Ascending aorta (tissue), 2 donors: ENCODE measurements at regions of chr10 and their contacts with region 1.

Region 1: GRCh38 chr10:62231371-62231770 is 37.3 kb downstream of the RTKN2 start:
- DNase-seq: no peak
- H3K4me3 ChIP-seq: no peak overlapping the region
- H3K27ac ChIP-seq: peak overlapping the region; percentile 28 to 48
- H3K4me1 ChIP-seq: peaks cover 0 to 30% of the 10 kb centered on the region in 2 donors
- H3K27me3 ChIP-seq: no peaks in the 10 kb centered on the region
- CTCF ChIP-seq: no peak

Region 2: GRCh38 chr10:61786728-61787127 is 444.6 kb before region 1 on chr10:
- intact Hi-C with region 1: no loop called
- DNase-seq: no peak
- H3K4me3 ChIP-seq: peak overlapping the region; percentile 29 to 51
- H3K27ac ChIP-seq: peak overlapping the region; percentile 44 to 55
- H3K4me1 ChIP-seq: peaks cover 0 to 6% of the 10 kb centered on the region in 2 donors
- H3K27me3 ChIP-seq: no peaks in the 10 kb centered on the region
- CTCF ChIP-seq: no peak

Region 3: DNA sequence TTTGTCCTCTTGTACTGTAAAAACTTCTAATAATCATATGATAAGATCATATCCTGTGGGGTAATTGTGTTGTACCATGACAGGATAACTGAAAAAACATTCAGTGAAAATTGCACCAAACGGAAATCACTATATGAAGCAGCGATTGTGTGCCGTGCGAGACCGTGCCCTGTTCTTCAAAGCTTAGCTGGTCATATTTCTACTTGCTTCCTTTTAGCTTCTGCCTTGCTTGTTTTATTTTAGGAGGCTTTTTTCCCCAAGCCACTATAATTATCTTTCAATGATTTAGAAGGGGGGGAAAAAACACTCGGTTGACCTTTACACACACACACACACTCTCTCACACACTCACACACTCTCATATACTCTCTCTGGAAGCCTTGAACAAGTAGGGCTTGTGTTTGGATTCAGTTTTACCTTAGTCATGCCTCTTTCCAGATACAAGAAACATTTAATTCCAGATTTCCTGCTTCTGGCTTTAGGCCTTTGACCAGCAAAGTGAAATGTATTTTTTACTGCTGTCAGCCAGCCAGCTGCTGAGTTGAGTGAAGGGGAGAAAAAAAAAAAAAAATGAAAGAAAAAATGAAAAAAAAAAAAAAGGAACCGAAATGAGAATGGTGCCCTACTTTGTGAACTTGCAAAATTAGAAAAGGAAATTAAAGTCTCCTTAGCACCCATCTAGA is 148.5 kb before region 1 on chr10:
- intact Hi-C with region 1: loop called (anchors 5 kb)
- DNase-seq: no peak
- H3K4me3 ChIP-seq: peak overlapping the region; percentile 12 to 43
- H3K27ac ChIP-seq: peak overlapping the region; percentile 64 to 85
- H3K4me1 ChIP-seq: peaks cover 14 to 58% of the 10 kb centered on the region in 2 donors
- H3K27me3 ChIP-seq: no peaks in the 10 kb centered on the region
- CTCF ChIP-seq: no peak

Region 4: DNA sequence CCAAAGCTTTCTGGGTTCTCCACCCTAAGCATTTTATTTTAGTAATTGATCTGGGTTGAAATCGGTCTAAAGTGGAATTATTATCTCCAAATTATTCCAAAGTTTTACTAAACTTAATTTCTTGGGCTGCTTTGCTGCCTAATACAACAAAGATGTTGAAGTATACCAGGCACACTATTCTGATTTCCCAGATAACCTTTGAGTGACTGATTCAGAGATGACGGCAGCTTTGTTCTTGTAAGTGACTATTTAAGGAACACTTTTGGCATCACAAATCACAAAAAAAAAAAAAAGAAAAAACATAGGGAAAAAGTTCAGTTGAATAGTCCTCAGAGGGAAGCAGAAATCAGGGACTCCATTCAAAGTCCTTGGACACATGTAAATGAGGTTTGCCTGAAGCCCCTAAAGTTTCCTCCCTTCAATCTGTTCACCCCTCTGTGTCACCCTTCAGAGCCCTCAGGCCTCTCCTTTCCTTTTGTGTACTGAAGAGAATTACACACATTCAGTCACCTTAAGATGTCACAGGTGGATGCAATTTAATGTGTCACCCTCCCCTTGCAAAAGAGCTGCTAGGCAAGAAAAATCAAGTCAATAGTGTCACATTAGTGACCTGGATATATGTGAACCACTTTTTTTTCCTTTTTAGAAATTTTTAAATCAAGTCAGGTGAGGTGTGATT is 44.2 kb before region 1 on chr10:
- intact Hi-C with region 1: loop called (anchors 5 kb)
- DNase-seq: no peak
- H3K4me3 ChIP-seq: peak overlapping the region in 1 of 2 donors; percentile 5
- H3K27ac ChIP-seq: peak overlapping the region; percentile 17 to 76
- H3K4me1 ChIP-seq: peaks cover 0 to 7% of the 10 kb centered on the region in 2 donors
- H3K27me3 ChIP-seq: no peaks in the 10 kb centered on the region
- CTCF ChIP-seq: no peak

Region 5: GRCh38 chr10:62323751-62324150 is 92.4 kb after region 1 on chr10:
- intact Hi-C with region 1: no loop called
- DNase-seq: no peak
- H3K4me3 ChIP-seq: no peak overlapping the region
- H3K27ac ChIP-seq: no peak overlapping the region
- H3K4me1 ChIP-seq: no peaks in the 10 kb centered on the region
- H3K27me3 ChIP-seq: no peaks in the 10 kb centered on the region
- CTCF ChIP-seq: no peak